Dorsolateral prefrontal cortex (tissue), 120 donors: ENCODE measurements at regions of chr9 and their contacts with region 1.

Region 1: GRCh38 chr9:14768405-14769229 is 46.1 kb upstream of the CER1 start:
- DNase-seq: peak in 1 of 10 donors; percentile 32
- H3K4me3 ChIP-seq: peak overlapping the region in 13 of 59 donors; percentile 0 to 31 (median 22)
- H3K27ac ChIP-seq: no peak overlapping the region
- H3K27me3 ChIP-seq: peaks cover 0 to 2% (median 0%) of the 10 kb centered on the region in 45 donors
- CTCF ChIP-seq: peak; percentile 67 to 91 (median 82)

Region 2: GRCh38 chr9:13841746-13842462 is 926.7 kb before region 1 on chr9:
- intact Hi-C with region 1: no loop called
- DNase-seq: no peak
- H3K4me3 ChIP-seq: no peak overlapping the region
- H3K27ac ChIP-seq: no peak overlapping the region
- H3K27me3 ChIP-seq: no peaks in the 10 kb centered on the region
- CTCF ChIP-seq: no peak

Region 3: DNA sequence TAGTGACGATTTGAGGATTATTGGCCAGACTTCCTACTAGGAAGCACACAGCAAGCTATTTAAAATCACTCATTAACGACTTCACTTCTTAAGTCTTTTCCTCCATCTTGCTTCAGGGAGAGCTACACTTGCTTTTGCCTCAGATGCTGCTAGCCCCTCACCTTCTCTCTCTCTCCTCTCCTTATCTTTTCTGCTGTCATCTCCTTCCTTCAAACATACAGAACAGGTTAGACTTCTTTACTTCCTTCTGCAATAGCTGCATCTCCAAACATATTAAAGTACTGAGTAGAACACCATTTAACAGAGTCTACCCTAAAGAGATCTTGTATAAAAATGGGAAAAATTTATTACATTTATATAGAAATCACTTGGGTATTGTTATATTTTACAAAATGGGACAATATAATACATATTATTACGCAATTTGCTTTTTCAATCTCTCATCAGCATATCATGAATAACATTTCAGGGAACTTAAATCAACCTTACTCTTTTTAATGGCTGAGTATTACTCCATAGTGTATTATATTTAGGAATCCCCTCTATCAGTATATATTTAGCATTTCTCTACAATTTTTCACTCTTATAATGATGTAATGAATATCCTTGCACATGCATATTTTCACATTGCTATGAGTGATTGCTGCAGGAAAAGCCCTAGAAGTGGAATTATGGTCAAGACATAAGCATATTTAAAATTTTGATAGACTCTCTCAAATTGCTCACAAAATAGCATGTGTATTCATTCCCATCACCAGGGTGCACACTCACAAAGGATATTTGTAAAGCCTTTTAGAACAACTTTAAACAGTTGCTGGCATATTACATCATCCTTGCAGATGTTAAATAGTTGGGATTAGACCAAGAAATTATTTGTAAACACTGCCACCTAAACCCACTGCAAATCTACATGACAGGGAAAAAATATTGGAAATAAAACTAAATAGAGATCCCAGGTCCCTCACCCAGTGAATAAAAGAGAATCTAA is 290.1 kb before region 1 on chr9:
- intact Hi-C with region 1: loop called in 1 of 2 experiments (anchors 10 kb)
- DNase-seq: no peak
- H3K4me3 ChIP-seq: no peak overlapping the region
- H3K27ac ChIP-seq: no peak overlapping the region
- H3K27me3 ChIP-seq: no peaks in the 10 kb centered on the region
- CTCF ChIP-seq: no peak

Region 4: DNA sequence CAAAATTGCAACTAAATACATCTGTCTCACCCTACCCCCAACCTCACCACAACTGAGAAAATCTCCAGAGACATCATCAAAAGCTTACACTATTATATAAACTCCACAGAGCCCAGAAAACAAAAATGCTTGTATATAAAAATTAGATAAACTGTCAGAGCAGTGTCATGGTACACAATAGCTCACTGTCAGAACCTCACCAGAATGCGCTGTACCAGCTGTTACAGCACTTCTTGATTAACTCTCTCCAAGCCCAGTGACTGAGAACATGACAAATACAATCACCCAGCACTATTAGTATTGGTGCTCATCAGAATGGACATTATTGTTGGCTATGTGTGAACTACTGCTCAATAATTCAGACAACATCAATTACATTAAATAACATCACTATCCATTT is 141.1 kb before region 1 on chr9:
- intact Hi-C with region 1: loop called in 1 of 2 experiments (anchors 10 kb)
- DNase-seq: no peak
- H3K4me3 ChIP-seq: no peak overlapping the region
- H3K27ac ChIP-seq: no peak overlapping the region
- H3K27me3 ChIP-seq: no peaks in the 10 kb centered on the region
- CTCF ChIP-seq: no peak

Region 5: GRCh38 chr9:14693206-14693861 is 75.3 kb before region 1 on chr9 and contains the start of gene ZDHHC21:
- intact Hi-C with region 1: no loop called
- DNase-seq: peak; percentile 60 to 90 (median 78)
- H3K4me3 ChIP-seq: peak within 1 kb of the TSS; percentile 61 to 92 (median 82)
- H3K27ac ChIP-seq: peak within 1 kb of the TSS in 55 of 59 donors; percentile 19 to 88 (median 75)
- H3K27me3 ChIP-seq: no peaks in the 10 kb centered on the region
- CTCF ChIP-seq: peak in 3 of 56 donors; percentile 13 to 27 (median 20)
- total RNA-seq, gene ZDHHC21: 19.9 to 50.4 (median 35.9) TPM